HepG2 (cell line): ENCODE measurements at regions of chr18 and their contacts with region 1.

Region 1: GRCh38 chr18:48951448-48952286 is 902 bp upstream of the SMAD7 start:
- DNase-seq: peak; percentile 82
- ATAC-seq: peak; percentile 48
- H3K4me3 ChIP-seq: peak overlapping the region; percentile 91 to 100 (median 97)
- H3K27ac ChIP-seq: peak overlapping the region; percentile 87
- H3K4me1 ChIP-seq: peaks cover 34% of the 10 kb centered on the region
- H3K27me3 ChIP-seq: no peaks in the 10 kb centered on the region; a peak in 2 of 5 replicates
- CTCF ChIP-seq: peak; percentile 27; the same call in 1 of the 2 replicates
- EP300 ChIP-seq: peak in 1 of 2 experiments; percentile 20; a peak in 1 of 4 replicates
- POLR2A ChIP-seq: peak in 1 of 2 experiments; percentile 27; a peak in 1 of 4 replicates
- RAD21 ChIP-seq: peak; percentile 54; the same call in 1 of the 2 replicates

Region 2: DNA sequence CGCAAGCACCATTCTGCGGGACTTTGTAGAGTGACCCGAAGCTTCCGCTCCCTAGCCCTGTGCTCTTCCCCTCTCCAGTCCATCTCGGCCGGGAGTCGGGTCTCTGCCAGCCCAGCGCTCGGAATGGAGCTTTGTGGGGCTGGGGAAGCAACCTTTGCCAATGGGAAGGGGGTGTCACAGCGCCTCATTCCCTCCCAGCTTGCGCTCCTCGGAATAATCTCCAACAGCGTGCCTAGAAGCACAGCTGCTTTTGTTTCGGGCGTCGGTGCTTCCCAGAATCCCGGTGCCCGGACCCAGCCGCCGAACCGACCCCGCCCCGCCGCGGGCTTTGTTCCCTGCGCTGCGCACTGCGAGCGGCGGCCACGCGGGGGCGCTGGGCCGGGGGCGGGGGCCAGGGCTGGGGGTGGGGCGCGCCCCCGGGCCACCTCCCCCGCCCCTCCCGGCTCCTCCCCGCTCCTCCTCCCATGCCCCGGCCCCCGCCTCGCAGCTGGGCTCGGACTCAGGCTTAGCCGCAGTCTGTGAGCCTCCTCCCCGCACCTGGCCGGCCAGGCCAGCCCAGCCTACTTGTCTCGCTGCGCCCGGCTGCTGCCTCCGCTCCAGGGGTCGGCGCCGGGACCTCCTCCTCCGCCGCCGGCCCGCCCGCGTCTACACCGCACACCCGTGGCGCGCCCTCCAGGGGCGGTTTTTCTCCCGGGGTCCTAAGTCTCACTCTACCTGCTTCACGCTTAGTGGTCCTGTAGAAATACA is 943.5 kb before region 1 on chr18:
- CTCF ChIA-PET with region 1: no interaction called
- POLR2A ChIA-PET with region 1: no interaction called
- in situ Hi-C with region 1: no loop called
- intact Hi-C with region 1: no loop called
- DNase-seq: peak; percentile 42
- ATAC-seq: peak; percentile 88
- H3K4me3 ChIP-seq: peak overlapping the region; percentile 56 to 77 (median 61)
- H3K27ac ChIP-seq: no peak overlapping the region
- H3K4me1 ChIP-seq: peaks cover 8% of the 10 kb centered on the region
- H3K27me3 ChIP-seq: peaks cover 2 to 30% of the 10 kb centered on the region in 2 experiments; a peak in 4 of 5 replicates
- CTCF ChIP-seq: peak; percentile 56
- EP300 ChIP-seq: no peak
- POLR2A ChIP-seq: no peak
- RAD21 ChIP-seq: 0 out of 2 replicates have a peak, but pooled peaks have one; percentile 8

Region 3: GRCh38 chr18:48896690-48897511 is 54.8 kb before region 1 on chr18:
- CTCF ChIA-PET with region 1: interaction called, 5 read pairs
- POLR2A ChIA-PET with region 1: interaction called, 25 read pairs
- in situ Hi-C with region 1: loop called (anchors 5 kb)
- intact Hi-C with region 1: loop called (anchors 2 kb)
- DNase-seq: peak; percentile 98
- ATAC-seq: peak; percentile 81
- H3K4me3 ChIP-seq: peak overlapping the region; percentile 22 to 61 (median 42); a peak in 5 of 6 replicates
- H3K27ac ChIP-seq: peak overlapping the region; percentile 41
- H3K4me1 ChIP-seq: peaks cover 71% of the 10 kb centered on the region
- H3K27me3 ChIP-seq: no peaks in the 10 kb centered on the region; a peak in 1 of 5 replicates
- CTCF ChIP-seq: peak; percentile 84
- EP300 ChIP-seq: peak in 1 of 2 experiments; percentile 37; a peak in 1 of 4 replicates
- POLR2A ChIP-seq: no peak
- RAD21 ChIP-seq: peak; percentile 96

Region 4: GRCh38 chr18:48928787-48929186 is 22.9 kb before region 1 on chr18:
- CTCF ChIA-PET with region 1: no interaction called
- POLR2A ChIA-PET with region 1: interaction called, 79 read pairs
- in situ Hi-C with region 1: no loop called
- intact Hi-C with region 1: loop called (anchors 1 kb)
- DNase-seq: peak; percentile 65
- ATAC-seq: peak; percentile 5; the same call in 1 of the 3 replicates
- H3K4me3 ChIP-seq: peak overlapping the region in 2 of 3 experiments; percentile 10 to 50; a peak in 2 of 6 replicates
- H3K27ac ChIP-seq: peak overlapping the region; percentile 89
- H3K4me1 ChIP-seq: peaks cover 97% of the 10 kb centered on the region
- H3K27me3 ChIP-seq: no peaks in the 10 kb centered on the region
- CTCF ChIP-seq: no peak
- EP300 ChIP-seq: peak in 1 of 2 experiments; percentile 40; a peak in 1 of 4 replicates
- POLR2A ChIP-seq: no peak
- RAD21 ChIP-seq: no peak

Region 5: GRCh38 chr18:49021433-49022129 is 69.9 kb after region 1 on chr18:
- CTCF ChIA-PET with region 1: no interaction called
- POLR2A ChIA-PET with region 1: interaction called, 12 read pairs
- in situ Hi-C with region 1: no loop called
- intact Hi-C with region 1: no loop called
- DNase-seq: peak; percentile 82
- ATAC-seq: peak; percentile 86
- H3K4me3 ChIP-seq: peak overlapping the region; percentile 49 to 67 (median 54)
- H3K27ac ChIP-seq: no peak overlapping the region
- H3K4me1 ChIP-seq: peaks cover 40% of the 10 kb centered on the region
- H3K27me3 ChIP-seq: peaks cover 2 to 15% of the 10 kb centered on the region in 2 experiments; a peak in 4 of 5 replicates
- CTCF ChIP-seq: peak; percentile 97
- EP300 ChIP-seq: no peak
- POLR2A ChIP-seq: no peak; a peak in 1 of 4 replicates
- RAD21 ChIP-seq: peak; percentile 88

Region 6: DNA sequence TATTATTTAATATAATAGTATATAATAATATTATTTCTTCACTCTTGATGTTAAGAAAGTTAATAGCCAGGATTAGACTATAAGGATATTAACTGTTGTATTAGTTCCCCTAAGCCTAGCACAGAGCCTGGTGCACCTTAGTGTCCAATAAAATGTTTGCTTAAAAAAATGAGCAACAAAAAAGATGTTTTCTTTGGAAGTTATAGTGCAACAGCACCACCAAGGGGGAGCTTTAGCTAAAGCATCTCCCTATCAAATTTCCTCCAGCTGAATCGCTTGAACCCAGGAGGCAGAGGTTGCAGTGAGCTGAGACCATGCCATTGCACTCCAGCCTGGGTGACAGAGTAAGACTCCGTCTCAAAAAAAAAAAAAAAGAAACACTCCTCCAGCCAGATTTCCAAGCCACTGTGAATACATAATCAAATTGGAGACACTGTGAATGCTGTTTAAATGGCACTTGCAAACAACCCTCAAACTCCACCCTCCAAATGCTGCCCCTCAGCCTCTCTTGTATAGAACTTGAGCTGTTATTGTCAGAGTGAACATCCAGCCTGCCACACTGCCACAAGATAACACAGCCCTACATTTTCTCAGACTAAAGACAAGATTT is 286.9 kb after region 1 on chr18:
- CTCF ChIA-PET with region 1: no interaction called
- POLR2A ChIA-PET with region 1: no interaction called
- in situ Hi-C with region 1: no loop called
- intact Hi-C with region 1: loop called (anchors 10 kb)
- DNase-seq: peak; percentile 38
- ATAC-seq: no peak
- H3K4me3 ChIP-seq: no peak overlapping the region
- H3K27ac ChIP-seq: no peak overlapping the region
- H3K4me1 ChIP-seq: no peaks in the 10 kb centered on the region
- H3K27me3 ChIP-seq: no peaks in the 10 kb centered on the region
- CTCF ChIP-seq: peak; percentile 69
- EP300 ChIP-seq: no peak
- POLR2A ChIP-seq: no peak
- RAD21 ChIP-seq: no peak; the same call in 1 of the 2 replicates